ENCODE measurements at regions of chr13 and their contacts with region 1.

Region 1: DNA sequence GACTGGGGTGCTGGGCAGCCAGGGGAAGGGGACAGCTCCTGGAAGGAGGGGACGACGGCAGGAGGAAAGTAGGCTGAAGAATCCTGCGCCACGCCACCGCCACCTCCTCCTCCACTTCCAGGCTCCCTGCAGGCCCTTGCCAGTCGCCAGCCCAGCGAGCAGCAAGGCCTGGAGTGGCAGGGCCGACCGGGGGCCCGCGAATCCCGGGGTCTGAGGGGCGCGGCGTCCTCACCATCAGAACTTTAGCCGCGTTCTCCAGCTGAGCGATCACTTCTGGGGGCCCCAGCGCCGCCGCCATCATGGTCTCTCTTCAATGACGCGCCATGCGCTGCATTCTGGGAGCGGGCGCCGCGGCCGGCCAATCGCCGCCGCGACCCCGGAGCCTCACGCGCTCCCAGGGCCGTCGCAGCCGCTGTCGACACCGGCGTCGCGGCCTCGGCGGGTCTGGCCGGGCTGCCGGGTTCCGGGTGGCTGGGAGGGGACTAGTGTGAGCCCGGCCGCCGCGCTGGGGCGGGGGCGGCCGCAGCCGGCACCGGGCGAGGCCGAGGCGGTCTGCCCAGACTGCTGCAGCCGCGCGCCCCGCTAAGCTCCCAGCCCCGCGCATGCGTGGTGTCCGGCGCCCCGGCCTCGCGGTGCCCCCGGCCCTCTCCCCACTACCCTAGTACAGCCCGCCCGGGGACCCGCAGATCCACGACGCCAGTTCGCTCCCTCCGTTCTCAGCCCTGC is at the start of gene XPO4:
- DNase-seq: peak; percentile 55 to 88 (median 75)
- ATAC-seq: peak; percentile 96
- H3K4me3 ChIP-seq: peak within 1 kb of the TSS; percentile 81 to 89
- H3K4me3 Mint-ChIP-seq: peak within 1 kb of the TSS; percentile 94
- H3K27ac ChIP-seq: peak within 1 kb of the TSS; percentile 80 to 83
- H3K27ac Mint-ChIP-seq: peak within 1 kb of the TSS; percentile 93
- H3K4me1 ChIP-seq: peaks cover 11% of the 10 kb centered on the region
- H3K4me1 Mint-ChIP-seq: peaks cover 31% of the 10 kb centered on the region
- H3K27me3 ChIP-seq: no peaks in the 10 kb centered on the region
- H3K27me3 Mint-ChIP-seq: no peaks in the 10 kb centered on the region
- CTCF ChIP-seq: no peak
- total RNA-seq, gene XPO4: 23.8 to 24.5 TPM

Region 2: GRCh38 chr13:20294497-20294896 is 608.1 kb before region 1 on chr13:
- CTCF ChIA-PET with region 1: no interaction called
- POLR2A ChIA-PET with region 1: no interaction called
- intact Hi-C with region 1: no loop called
- DNase-seq: no peak
- ATAC-seq: no peak
- H3K4me3 ChIP-seq: no peak overlapping the region
- H3K4me3 Mint-ChIP-seq: no peak overlapping the region
- H3K27ac ChIP-seq: no peak overlapping the region
- H3K27ac Mint-ChIP-seq: no peak overlapping the region
- H3K4me1 ChIP-seq: no peaks in the 10 kb centered on the region
- H3K4me1 Mint-ChIP-seq: no peaks in the 10 kb centered on the region
- H3K27me3 ChIP-seq: no peaks in the 10 kb centered on the region
- H3K27me3 Mint-ChIP-seq: peaks cover 12% of the 10 kb centered on the region
- CTCF ChIP-seq: no peak

Region 3: DNA sequence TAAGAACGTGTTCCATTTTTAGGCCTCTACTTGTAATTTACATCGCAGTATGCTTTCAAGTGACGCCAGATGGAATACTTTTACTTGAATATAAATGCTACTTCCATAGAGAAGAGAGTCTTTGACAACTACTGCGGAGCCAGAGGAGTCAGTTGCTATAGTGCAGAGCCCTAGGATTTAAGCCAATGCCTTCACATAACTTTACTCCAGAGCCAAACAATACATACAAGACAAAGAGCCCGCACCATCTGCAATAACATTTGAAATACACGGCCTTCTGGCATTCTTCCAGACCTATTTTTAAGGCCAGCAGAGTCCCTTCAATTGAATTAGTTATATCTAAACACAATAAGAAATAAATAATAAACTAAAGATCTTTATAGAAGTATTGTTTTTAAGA is 59.4 kb before region 1 on chr13:
- CTCF ChIA-PET with region 1: no interaction called
- POLR2A ChIA-PET with region 1: no interaction called
- intact Hi-C with region 1: loop called in 1 of 2 experiments (anchors 5 kb)
- DNase-seq: no peak
- ATAC-seq: no peak
- H3K4me3 ChIP-seq: no peak overlapping the region
- H3K4me3 Mint-ChIP-seq: no peak overlapping the region
- H3K27ac ChIP-seq: no peak overlapping the region
- H3K27ac Mint-ChIP-seq: no peak overlapping the region
- H3K4me1 ChIP-seq: no peaks in the 10 kb centered on the region
- H3K4me1 Mint-ChIP-seq: no peaks in the 10 kb centered on the region
- H3K27me3 ChIP-seq: no peaks in the 10 kb centered on the region
- H3K27me3 Mint-ChIP-seq: no peaks in the 10 kb centered on the region
- CTCF ChIP-seq: no peak

Region 4: GRCh38 chr13:20993661-20994440 is 91.2 kb after region 1 on chr13:
- CTCF ChIA-PET with region 1: no interaction called
- POLR2A ChIA-PET with region 1: no interaction called
- intact Hi-C with region 1: no loop called
- DNase-seq: no peak
- ATAC-seq: no peak
- H3K4me3 ChIP-seq: no peak overlapping the region
- H3K4me3 Mint-ChIP-seq: no peak overlapping the region
- H3K27ac ChIP-seq: no peak overlapping the region
- H3K27ac Mint-ChIP-seq: no peak overlapping the region
- H3K4me1 ChIP-seq: no peaks in the 10 kb centered on the region
- H3K4me1 Mint-ChIP-seq: no peaks in the 10 kb centered on the region
- H3K27me3 ChIP-seq: no peaks in the 10 kb centered on the region
- H3K27me3 Mint-ChIP-seq: no peaks in the 10 kb centered on the region
- CTCF ChIP-seq: no peak

Region 5: DNA sequence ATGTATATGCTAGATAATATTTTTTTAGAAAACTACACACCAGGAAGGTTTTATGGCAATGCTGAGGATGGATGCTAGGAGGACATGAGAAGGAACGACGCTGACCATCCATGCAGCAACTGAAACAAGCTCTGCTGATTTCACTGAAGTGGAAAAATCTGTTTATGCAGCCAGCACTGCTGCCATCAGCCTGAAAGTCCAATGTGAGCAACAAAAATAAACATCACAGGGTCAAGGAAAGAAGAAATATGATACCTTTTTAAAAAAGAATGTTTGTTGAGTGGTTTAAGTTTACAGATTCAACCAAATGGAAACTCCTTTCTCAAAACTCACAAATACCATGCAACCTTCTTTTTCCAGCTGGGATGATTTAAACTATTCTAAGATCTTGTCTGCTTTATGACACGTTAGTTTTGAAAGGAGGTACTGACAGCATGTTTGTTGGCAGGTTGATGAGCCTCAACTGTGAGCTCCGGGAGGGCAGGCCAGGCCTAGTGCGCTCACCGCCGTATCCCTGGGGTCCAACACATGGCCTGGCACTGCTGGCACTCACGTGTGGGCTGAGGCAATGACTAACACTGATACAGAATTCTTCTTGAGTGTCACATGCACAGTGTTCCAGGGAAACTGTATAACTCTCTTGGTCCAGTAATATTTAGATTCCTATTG is 112.0 kb after region 1 on chr13:
- CTCF ChIA-PET with region 1: no interaction called
- POLR2A ChIA-PET with region 1: no interaction called
- intact Hi-C with region 1: no loop called
- DNase-seq: no peak
- ATAC-seq: no peak
- H3K4me3 ChIP-seq: no peak overlapping the region
- H3K4me3 Mint-ChIP-seq: no peak overlapping the region
- H3K27ac ChIP-seq: no peak overlapping the region
- H3K27ac Mint-ChIP-seq: no peak overlapping the region
- H3K4me1 ChIP-seq: peaks cover 3% of the 10 kb centered on the region
- H3K4me1 Mint-ChIP-seq: peaks cover 12% of the 10 kb centered on the region
- H3K27me3 ChIP-seq: no peaks in the 10 kb centered on the region
- H3K27me3 Mint-ChIP-seq: no peaks in the 10 kb centered on the region
- CTCF ChIP-seq: no peak

Measured in CD8-positive, alpha-beta T cell (primary cell).